Dorsolateral prefrontal cortex (tissue), 120 donors: ENCODE measurements at regions of chr4 and their contacts with region 1.

Region 1: GRCh38 chr4:150217192-150217591 is 138.9 kb downstream of the DCLK2 start:
- DNase-seq: no peak
- H3K4me3 ChIP-seq: peak overlapping the region in 29 of 59 donors; percentile 0 to 54 (median 19)
- H3K27ac ChIP-seq: peak overlapping the region in 46 of 59 donors; percentile 1 to 79 (median 48)
- H3K27me3 ChIP-seq: no peaks in the 10 kb centered on the region
- CTCF ChIP-seq: peak in 55 of 56 donors; percentile 17 to 72 (median 54)

Region 2: GRCh38 chr4:149701435-149702156 is 515.6 kb before region 1 on chr4:
- intact Hi-C with region 1: no loop called
- DNase-seq: no peak
- H3K4me3 ChIP-seq: no peak overlapping the region
- H3K27ac ChIP-seq: no peak overlapping the region
- H3K27me3 ChIP-seq: no peaks in the 10 kb centered on the region
- CTCF ChIP-seq: no peak

Region 3: DNA sequence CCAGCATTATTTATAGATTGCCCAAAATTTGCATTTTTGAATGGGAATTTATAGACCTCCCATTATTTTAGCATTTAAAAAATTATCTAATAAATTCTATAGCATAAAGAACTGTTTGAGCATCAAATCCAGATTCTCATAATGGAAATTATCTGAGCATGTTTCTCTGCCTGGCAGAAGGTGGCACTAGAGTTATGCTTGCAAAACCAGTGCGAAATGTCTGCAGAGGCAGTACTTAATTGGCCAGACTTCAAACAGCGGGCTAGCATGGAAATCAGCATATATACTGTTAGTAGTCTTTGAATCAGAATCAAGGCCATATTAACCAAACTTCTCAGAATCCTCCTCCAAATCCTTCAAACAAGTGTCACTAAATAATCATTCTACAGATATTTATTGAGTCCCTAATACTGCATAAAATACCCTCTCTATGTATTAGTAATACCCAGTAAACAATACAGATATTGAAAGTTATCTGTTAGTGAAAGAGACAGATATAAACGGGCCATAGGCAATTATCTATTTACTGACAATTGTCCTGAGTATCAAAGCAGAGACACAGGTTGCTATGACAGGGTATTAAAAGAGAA is 217.6 kb before region 1 on chr4:
- intact Hi-C with region 1: loop called in 1 of 2 experiments (anchors 5 kb)
- DNase-seq: peak in 4 of 10 donors; percentile 5 to 57 (median 32)
- H3K4me3 ChIP-seq: peak overlapping the region in 1 of 59 donors; percentile 4
- H3K27ac ChIP-seq: no peak overlapping the region
- H3K27me3 ChIP-seq: no peaks in the 10 kb centered on the region
- CTCF ChIP-seq: peak; percentile 54 to 92 (median 78)

Region 4: GRCh38 chr4:150010525-150011126 is 206.6 kb before region 1 on chr4:
- intact Hi-C with region 1: loop called in 1 of 2 experiments (anchors 2 kb)
- DNase-seq: peak in 4 of 10 donors; percentile 5 to 60 (median 21)
- H3K4me3 ChIP-seq: no peak overlapping the region
- H3K27ac ChIP-seq: no peak overlapping the region
- H3K27me3 ChIP-seq: peaks cover 0 to 3% (median 0%) of the 10 kb centered on the region in 45 donors
- CTCF ChIP-seq: peak; percentile 41 to 78 (median 60)

Region 5: DNA sequence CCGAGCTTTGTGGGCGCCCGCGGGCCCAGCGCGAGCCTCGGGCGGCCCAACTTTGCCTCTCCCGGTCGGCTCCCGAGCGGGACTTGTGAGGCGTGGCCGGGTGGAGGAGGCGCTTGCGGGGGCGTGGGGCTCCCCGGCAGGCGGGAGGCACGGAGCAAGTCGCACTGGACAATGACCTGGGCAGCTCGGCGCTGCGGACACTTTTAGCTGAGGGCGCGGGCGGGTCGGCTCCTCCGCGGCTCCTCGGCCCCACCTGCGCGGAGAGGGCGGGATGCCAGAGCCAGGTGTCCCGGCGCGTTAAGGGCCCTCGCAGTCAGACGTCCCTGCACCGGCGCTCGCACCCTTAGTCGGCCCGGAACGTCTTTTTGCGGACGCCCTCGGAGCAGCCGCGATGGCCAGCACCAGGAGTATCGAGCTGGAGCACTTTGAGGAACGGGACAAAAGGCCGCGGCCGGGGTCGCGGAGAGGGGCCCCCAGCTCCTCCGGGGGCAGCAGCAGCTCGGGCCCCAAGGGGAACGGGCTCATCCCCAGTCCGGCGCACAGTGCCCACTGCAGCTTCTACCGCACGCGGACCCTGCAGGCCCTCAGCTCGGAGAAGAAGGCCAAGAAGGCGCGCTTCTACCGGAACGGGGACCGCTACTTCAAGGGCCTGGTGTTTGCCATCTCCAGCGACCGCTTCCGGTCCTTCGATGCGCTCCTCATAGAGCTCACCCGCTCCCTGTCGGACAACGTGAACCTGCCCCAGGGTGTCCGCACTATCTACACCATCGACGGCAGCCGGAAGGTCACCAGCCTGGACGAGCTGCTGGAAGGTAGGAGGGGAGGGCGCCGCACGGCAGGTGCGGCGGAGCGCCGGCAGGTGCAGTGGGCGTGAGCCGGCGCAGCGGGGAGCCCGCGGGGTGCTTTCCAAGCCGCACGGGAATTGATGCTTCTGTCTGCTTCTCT is 138.3 kb before region 1 on chr4:
- intact Hi-C with region 1: loop called (anchors 5 to 10 kb)
- DNase-seq: peak in 8 of 10 donors; percentile 31 to 58 (median 42)
- H3K4me3 ChIP-seq: peak overlapping the region; percentile 60 to 93 (median 82)
- H3K27ac ChIP-seq: peak overlapping the region in 58 of 59 donors; percentile 11 to 92 (median 81)
- H3K27me3 ChIP-seq: no peaks in the 10 kb centered on the region
- CTCF ChIP-seq: no peak

Region 6: DNA sequence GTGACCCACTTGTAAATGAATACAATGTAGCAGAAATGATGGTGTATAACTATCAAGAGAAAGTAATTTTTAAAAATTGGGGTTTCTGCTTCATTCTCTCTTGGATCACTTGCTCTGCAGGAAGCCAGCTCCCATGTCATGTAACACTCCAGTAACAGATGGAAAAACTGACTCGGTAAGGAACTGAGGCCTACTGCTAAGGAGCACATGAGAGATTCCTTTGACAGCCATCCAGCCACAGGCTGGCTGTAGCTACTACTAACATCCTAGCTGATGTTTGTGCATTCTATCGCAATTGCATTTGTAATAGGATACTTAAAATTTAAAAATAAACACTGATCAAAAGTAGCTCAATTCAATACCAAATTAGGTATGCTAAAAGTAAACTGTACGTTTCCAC is 262.5 kb after region 1 on chr4:
- intact Hi-C with region 1: no loop called
- DNase-seq: no peak
- H3K4me3 ChIP-seq: no peak overlapping the region
- H3K27ac ChIP-seq: no peak overlapping the region
- H3K27me3 ChIP-seq: no peaks in the 10 kb centered on the region
- CTCF ChIP-seq: no peak

Region 7: GRCh38 chr4:150598909-150599308 is 381.7 kb after region 1 on chr4:
- intact Hi-C with region 1: no loop called
- DNase-seq: no peak
- H3K4me3 ChIP-seq: no peak overlapping the region
- H3K27ac ChIP-seq: no peak overlapping the region
- H3K27me3 ChIP-seq: no peaks in the 10 kb centered on the region
- CTCF ChIP-seq: no peak